ENCODE measurements at regions of chr2 and their contacts with region 1.

Region 1: DNA sequence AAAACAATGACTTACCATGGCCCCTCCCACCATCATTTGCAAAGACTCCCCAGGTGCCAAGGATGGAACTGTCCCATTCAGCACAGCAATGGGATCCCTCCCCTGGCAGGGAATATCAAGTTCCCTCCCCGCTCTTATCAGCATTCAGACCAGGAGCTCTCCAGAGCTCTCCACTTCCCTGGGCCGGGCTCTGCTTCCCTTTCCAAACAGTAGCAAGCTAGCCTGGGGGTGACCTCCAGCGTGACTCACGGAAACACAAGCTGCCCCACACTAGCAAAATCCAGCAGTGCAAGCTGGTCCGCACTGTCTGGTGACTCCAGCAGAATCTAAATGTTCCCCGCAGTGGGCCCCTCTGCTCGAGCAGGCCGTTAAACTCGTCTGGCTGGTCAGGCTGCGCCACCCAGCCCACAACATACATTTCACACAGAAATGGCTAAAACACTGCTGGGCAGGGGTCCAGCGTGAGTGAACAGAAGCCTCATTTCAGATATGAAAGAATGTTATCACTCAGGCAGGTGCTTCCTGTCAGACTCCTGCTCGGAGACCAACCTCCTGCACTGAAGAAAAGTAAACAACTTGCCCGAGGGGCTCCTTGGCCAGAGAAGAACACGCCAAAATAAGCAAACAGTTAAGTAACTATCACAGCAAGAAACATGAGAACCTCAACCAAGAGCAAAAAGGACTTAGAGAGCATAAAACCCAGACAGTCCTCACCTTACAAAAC is 33.9 kb downstream of the STAT1 start:
- DNase-seq: peak; percentile 99
- H3K4me3 ChIP-seq: peak overlapping the region in 1 of 3 experiments; percentile 5
- H3K27ac ChIP-seq: peak overlapping the region; percentile 87
- H3K4me1 ChIP-seq: peaks cover 57% of the 10 kb centered on the region
- H3K27me3 ChIP-seq: no peaks in the 10 kb centered on the region
- CTCF ChIP-seq: no peak
- POLR2A ChIP-seq: peak; percentile 13

Region 2: DNA sequence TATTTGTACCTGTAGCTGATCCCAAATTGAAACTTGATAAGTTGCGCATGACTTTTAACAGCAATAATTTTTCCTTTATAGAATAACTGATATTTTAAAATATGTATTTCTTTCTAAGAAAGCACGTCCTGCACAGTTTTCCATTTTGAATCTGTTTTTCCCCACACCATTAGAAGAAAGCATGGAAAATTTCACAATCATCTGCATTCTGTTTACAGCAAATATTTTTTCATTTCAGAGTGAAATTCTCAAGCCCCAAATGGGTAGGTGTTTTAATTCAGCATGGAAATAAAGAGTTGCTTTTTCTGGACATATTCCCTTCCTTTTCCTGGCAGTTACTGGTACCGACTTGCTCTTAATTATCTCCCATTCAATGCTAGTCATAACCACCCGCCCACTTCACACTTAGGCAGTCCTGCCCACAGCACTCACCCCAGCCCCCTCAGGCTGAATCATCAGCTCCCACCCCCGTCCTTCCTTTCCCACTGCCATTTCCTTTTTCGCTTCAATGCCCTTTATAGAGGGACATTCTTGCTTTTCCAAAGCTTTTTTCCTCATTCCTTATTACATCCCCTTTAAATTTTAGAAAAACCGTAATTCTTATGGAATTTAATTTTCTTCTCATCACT is 188.6 kb before region 1 on chr2:
- CTCF ChIA-PET with region 1: no interaction called
- POLR2A ChIA-PET with region 1: no interaction called
- dilution Hi-C with region 1: no loop called
- intact Hi-C with region 1: loop called (anchors 2 kb)
- DNase-seq: peak; percentile 93
- H3K4me3 ChIP-seq: peak overlapping the region in 1 of 3 experiments; percentile 49
- H3K27ac ChIP-seq: peak overlapping the region; percentile 92
- H3K4me1 ChIP-seq: peaks cover 45% of the 10 kb centered on the region
- H3K27me3 ChIP-seq: no peaks in the 10 kb centered on the region
- CTCF ChIP-seq: no peak
- POLR2A ChIP-seq: no peak

Region 3: DNA sequence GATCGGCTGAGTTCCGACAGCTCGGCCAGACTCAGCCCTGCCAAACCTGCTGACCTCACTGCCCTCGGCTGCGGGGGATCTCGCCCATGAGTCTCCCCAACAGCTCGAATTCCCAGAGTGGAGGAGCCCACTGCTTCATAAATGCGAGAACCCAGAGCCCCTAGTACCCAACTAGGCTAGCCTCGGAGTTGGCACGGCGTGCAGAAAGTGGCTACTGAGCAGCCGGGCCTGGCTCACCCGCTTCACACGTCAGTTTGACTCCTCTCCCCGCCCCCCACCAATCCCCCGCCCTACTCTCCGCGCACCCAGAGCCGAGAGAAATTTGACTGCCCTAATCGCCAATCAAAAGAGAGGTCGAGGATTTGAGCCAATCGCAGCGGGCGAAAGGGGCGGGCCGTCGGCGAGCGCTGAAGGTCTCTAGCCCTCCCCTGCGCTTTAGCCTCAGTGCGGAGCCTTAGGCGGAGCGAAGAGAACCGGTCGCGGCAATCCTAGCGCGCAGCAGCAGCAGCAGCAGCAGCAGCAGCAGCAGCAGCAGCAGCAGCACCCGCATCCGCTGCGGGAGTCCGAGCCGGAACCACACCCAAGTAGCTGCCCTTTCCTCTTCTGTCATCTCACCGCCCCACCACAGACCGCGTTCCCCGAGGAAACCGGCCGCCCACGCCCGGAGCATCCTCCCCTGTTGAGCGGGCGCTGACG is 99.5 kb before region 1 on chr2 and contains the start of gene GLS:
- CTCF ChIA-PET with region 1: interaction called, 3 read pairs
- POLR2A ChIA-PET with region 1: interaction called, 5 read pairs
- dilution Hi-C with region 1: no loop called
- intact Hi-C with region 1: loop called (anchors 1 kb)
- DNase-seq: peak; percentile 98
- H3K4me3 ChIP-seq: peak within 1 kb of the TSS; percentile 80 to 99 (median 98)
- H3K27ac ChIP-seq: peak within 1 kb of the TSS; percentile 83
- H3K4me1 ChIP-seq: peaks cover 32% of the 10 kb centered on the region
- H3K27me3 ChIP-seq: no peaks in the 10 kb centered on the region
- CTCF ChIP-seq: no peak
- POLR2A ChIP-seq: peak; percentile 99
- total RNA-seq, gene GLS: 181 and 183 TPM in 2 replicates

Region 4: GRCh38 chr2:190947711-190948251 is 32.3 kb before region 1 on chr2:
- CTCF ChIA-PET with region 1: interaction called, 25 read pairs
- POLR2A ChIA-PET with region 1: interaction called, 14 read pairs
- dilution Hi-C with region 1: no loop called
- intact Hi-C with region 1: loop called (anchors 1 kb)
- DNase-seq: peak; percentile 93
- H3K4me3 ChIP-seq: peak overlapping the region in 1 of 3 experiments; percentile 33
- H3K27ac ChIP-seq: peak overlapping the region; percentile 78
- H3K4me1 ChIP-seq: peaks cover 31% of the 10 kb centered on the region
- H3K27me3 ChIP-seq: no peaks in the 10 kb centered on the region
- CTCF ChIP-seq: no peak
- POLR2A ChIP-seq: peak; percentile 29

Region 5: GRCh38 chr2:191013932-191014652 is 34.0 kb after region 1 on chr2 and contains the start of gene STAT1:
- CTCF ChIA-PET with region 1: no interaction called
- POLR2A ChIA-PET with region 1: no interaction called
- dilution Hi-C with region 1: no loop called
- intact Hi-C with region 1: loop called (anchors 1 kb)
- DNase-seq: peak; percentile 92
- H3K4me3 ChIP-seq: peak within 1 kb of the TSS; percentile 50 to 94 (median 78)
- H3K27ac ChIP-seq: peak within 1 kb of the TSS; percentile 64
- H3K4me1 ChIP-seq: peaks cover 16% of the 10 kb centered on the region
- H3K27me3 ChIP-seq: no peaks in the 10 kb centered on the region
- CTCF ChIP-seq: no peak
- POLR2A ChIP-seq: peak; percentile 96
- total RNA-seq, gene STAT1: 59.2 and 67.6 TPM in 2 replicates

Region 6: DNA sequence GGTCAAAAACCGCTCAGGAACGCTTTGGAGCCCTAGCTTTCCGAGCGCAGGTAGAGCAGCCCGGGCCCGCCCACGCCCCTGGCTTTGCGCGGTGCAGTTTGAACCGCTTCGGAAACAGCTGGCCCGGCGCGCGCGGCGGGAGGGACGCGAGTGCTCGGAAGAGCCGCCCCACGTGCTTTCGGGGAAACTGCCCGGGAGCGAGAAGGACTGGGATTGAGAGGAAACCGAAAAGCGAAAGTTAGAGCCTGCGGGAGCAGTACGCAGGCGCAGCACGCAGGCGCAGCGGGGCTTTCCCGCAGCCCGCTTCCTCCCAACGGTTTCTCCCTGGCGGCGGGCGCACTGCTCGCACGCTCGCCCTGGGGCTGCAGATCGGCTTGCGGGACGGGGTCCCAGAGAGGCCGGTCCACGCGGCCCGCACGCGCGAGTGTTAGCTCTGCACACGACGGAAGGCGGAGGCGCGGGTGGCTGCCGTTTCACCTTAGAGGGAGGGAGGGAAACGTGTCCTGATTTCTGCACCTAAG is 40.2 kb after region 1 on chr2:
- CTCF ChIA-PET with region 1: interaction called, 3 read pairs
- POLR2A ChIA-PET with region 1: no interaction called
- dilution Hi-C with region 1: no loop called
- intact Hi-C with region 1: loop called (anchors 1 kb)
- DNase-seq: peak; percentile 99
- H3K4me3 ChIP-seq: peak overlapping the region; percentile 39 to 57 (median 47)
- H3K27ac ChIP-seq: peak overlapping the region; percentile 51
- H3K4me1 ChIP-seq: peaks cover 14% of the 10 kb centered on the region
- H3K27me3 ChIP-seq: no peaks in the 10 kb centered on the region
- CTCF ChIP-seq: peak in 1 of 2 donors; percentile 10
- POLR2A ChIP-seq: peak; percentile 97

Region 7: DNA sequence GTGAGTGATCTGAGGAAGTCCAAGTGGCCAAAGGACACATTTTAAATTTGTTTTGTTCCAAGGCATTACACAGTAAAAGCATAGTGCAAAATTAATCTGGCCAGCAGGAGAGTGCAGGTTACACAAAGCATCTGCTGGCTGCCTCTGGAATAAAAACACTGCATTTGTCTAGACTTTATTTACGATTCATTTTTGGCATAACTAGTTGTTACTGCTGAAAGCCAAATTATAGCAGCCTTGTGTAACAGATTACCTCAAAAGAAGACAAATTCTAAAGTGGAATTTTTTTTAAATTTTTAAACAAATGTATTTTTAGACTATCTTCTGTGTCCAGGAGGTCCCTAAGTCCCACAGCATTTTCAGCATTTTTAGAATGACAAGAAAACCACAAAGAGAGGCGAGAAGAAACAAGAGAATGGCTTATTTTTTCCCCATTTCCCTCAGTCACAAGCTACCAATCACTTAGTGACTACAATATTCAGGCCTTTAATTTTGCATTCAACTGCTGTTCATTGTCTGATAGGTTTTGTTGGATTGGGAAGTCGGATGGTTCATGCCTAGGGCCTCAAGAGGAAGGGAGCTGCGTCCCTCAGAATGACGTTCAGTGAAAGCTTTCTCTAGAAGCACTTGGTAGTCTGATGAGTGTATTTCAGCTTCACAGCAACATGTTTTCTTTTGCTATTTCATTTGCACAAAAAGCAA is 1168.7 kb after region 1 on chr2:
- CTCF ChIA-PET with region 1: no interaction called
- POLR2A ChIA-PET with region 1: no interaction called
- dilution Hi-C with region 1: no loop called
- intact Hi-C with region 1: no loop called
- DNase-seq: peak; percentile 23
- H3K4me3 ChIP-seq: no peak overlapping the region
- H3K27ac ChIP-seq: no peak overlapping the region
- H3K4me1 ChIP-seq: peaks cover 6% of the 10 kb centered on the region
- H3K27me3 ChIP-seq: no peaks in the 10 kb centered on the region
- CTCF ChIP-seq: no peak
- POLR2A ChIP-seq: no peak

Measured in endothelial cell of umbilical vein (primary cell).